Heart right ventricle (tissue), 16 donors: ENCODE measurements at regions of chr3 and their contacts with region 1.

Region 1: GRCh38 chr3:69806735-69807438 is 67.6 kb downstream of the MITF start:
- DNase-seq: no peak
- ATAC-seq: no peak
- H3K4me3 ChIP-seq: no peak overlapping the region
- H3K27ac ChIP-seq: no peak overlapping the region
- H3K4me1 ChIP-seq: peaks cover 0 to 27% (median 15%) of the 10 kb centered on the region in 9 donors
- H3K27me3 ChIP-seq: no peaks in the 10 kb centered on the region
- CTCF ChIP-seq: no peak

Region 2: DNA sequence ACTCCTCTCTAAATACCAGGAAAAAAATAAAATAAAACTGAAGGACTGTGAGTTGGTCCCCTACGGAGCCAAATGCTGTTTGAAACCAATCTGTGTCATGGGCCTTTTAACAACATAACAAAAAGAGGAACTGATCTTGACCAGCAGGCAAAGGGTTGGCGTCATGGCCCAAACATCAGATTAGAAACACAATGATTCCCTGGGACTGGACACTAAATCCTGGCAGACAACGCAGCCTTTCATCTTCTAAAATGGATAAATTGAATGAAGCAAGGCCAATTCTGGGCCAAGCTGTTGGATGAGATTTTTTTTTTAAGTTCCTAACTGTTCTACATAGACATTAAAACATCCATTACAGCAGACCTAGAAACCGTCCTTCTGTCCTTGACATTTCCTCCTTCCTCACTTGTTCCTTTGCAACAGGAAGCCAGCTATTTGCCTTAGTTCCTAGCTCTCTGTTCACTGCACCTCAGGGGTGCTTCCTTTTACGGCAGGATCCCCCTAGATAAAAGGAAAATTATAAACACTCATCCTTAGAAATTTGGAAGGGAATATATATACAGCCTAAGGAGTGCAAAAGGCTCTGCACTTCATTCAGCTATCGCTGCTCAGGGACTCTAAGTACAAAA is 853.0 kb before region 1 on chr3:
- intact Hi-C with region 1: no loop called
- DNase-seq: no peak
- ATAC-seq: no peak
- H3K4me3 ChIP-seq: no peak overlapping the region
- H3K27ac ChIP-seq: no peak overlapping the region
- H3K4me1 ChIP-seq: no peaks in the 10 kb centered on the region
- H3K27me3 ChIP-seq: peaks cover 0 to 22% (median 10%) of the 10 kb centered on the region in 7 donors
- CTCF ChIP-seq: no peak

Region 3: DNA sequence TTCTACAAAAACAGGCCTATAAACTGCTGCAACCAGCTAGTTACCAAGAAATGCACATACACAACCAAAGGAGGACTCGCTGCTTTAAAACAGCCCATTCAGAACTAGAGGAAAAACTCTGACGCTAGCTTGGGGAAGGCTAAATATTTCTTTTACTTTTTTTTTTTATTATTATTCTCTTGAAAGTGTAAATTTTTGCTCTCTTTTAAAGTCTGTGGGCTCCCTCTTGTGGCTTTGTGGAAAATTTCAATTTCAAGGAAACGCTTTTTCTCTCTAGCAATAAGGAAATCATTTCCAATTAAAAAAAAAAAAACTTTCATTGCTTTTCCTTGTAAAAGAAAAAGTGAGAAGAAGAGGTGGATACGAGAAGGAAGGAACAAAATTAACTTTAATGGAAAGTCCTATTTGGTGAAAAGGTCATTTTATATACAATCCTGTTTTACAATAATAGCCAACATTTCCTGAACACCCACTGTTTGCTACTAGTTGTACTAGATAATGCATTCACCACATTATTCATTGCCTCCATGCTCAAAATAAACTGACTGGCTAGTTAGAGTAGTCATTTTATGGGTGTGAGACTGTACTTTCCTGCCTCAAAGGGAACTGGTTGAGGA is 141.5 kb after region 1 on chr3:
- intact Hi-C with region 1: loop called in 1 of 10 experiments (anchors 10 kb)
- DNase-seq: no peak
- ATAC-seq: peak in 1 of 8 donors; percentile 17
- H3K4me3 ChIP-seq: no peak overlapping the region
- H3K27ac ChIP-seq: no peak overlapping the region
- H3K4me1 ChIP-seq: peaks cover 0 to 15% (median 0%) of the 10 kb centered on the region in 9 donors
- H3K27me3 ChIP-seq: no peaks in the 10 kb centered on the region
- CTCF ChIP-seq: peak; percentile 38 to 77 (median 66)